K562 (cell line): ENCODE measurements at regions of chr2 and their contacts with region 1.

Region 1: DNA sequence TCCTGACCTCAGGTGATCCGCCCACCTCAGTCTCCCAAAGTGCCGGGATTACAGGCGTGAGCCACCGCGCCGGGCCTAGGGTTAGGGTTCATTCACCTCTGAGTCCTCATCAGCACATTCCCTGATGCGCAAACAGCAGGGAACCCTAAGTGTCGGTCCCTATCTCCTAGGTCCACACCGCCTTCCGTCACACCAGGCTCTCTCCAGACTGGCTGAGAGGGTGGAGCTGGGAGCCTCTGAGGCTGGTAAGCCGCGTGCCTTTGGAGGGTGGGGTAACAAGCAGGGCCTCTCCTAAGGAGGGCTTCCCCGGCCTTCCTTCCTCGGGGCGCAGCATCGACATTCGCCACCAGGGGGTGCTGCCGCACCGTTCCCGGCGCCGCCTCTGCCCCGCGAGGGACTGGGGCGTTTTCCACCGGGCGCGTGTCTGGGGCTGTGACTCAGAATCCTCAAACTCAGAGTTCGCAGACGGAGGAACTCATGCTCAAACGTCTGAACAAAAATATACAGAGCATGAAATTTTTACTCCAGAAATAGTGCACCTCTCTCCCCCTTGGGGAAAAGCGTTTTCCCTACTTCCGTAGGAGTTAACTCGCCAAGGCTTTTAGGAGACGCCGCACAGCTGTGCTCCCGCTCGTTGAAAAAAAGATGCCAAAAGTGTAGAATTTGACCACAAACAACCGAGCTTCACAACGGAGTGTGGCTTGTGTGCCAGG is 63.9 kb upstream of the ASAP2 start:
- DNase-seq: peak; percentile 90 to 97 (median 96)
- ATAC-seq: peak; percentile 94
- H3K4me3 ChIP-seq: peak overlapping the region; percentile 5; the same call in 1 of the 2 replicates
- H3K27ac ChIP-seq: no peak overlapping the region
- H3K4me1 ChIP-seq: peaks cover 6 to 34% of the 10 kb centered on the region in 2 experiments; a peak in 4 of 5 replicates
- H3K27me3 ChIP-seq: peaks cover 5 to 11% of the 10 kb centered on the region in 2 experiments; a peak in 4 of 5 replicates
- CTCF ChIP-seq: peak; percentile 94 to 96 (median 95)
- EP300 ChIP-seq: no peak; the same call in 1 of the 2 replicates
- POLR2A ChIP-seq: no peak
- RAD21 ChIP-seq: peak; percentile 100

Region 2: DNA sequence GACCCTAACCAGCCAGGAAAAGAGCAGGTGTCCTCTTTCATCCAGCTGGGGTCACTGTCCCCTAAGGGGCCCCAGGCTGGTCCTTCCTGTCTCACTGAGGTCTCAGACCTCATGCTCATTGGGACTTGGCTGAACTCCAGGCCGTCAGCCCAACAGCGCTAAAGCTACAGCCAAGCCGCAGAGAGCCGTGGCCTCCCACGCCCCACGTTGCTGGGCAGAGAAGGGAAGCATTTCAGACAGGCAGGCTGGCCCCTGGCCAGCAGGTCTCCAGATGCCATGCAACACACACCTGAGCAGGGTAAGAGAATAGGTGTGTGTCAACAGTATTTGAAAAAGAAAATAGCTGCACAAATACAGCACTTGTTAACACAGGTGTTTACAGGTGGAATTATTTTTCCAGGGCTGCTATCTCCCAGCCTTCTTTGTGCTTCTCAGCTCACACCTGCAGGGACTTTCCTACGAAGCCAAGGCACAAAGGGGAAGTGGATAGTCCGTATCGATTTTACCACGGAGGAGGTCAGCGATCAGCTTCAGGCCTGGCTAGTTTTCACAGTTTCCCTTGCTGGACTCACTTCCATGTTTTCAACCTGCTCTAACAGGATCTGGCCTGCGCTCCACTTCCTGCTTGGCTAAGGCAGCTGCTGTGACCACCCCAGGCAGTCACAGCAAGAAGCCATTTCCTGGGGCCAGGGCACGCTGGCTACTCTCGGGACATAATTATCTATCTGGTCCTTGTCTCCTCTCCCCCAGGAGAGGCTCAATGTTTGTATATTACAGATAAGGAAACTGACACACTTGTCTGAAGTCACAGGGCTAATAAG is 616.9 kb before region 1 on chr2:
- CTCF ChIA-PET with region 1: no interaction called
- POLR2A ChIA-PET with region 1: no interaction called
- in situ Hi-C with region 1: no loop called
- intact Hi-C with region 1: loop called (anchors 10 kb)
- DNase-seq: peak; percentile 94 to 97 (median 95)
- ATAC-seq: peak; percentile 96
- H3K4me3 ChIP-seq: no peak overlapping the region
- H3K27ac ChIP-seq: peak overlapping the region; percentile 79
- H3K4me1 ChIP-seq: peaks cover 20 to 24% of the 10 kb centered on the region in 2 experiments
- H3K27me3 ChIP-seq: no peaks in the 10 kb centered on the region; a peak in 1 of 5 replicates
- CTCF ChIP-seq: peak; percentile 87 to 96 (median 90)
- EP300 ChIP-seq: peak; percentile 91
- POLR2A ChIP-seq: no peak
- RAD21 ChIP-seq: peak; percentile 97 to 99

Region 3: GRCh38 chr2:8872821-8873432 is 269.8 kb before region 1 on chr2:
- CTCF ChIA-PET with region 1: interaction called, 6 read pairs
- POLR2A ChIA-PET with region 1: interaction called, 3 read pairs
- in situ Hi-C with region 1: no loop called
- intact Hi-C with region 1: loop called (anchors 2 kb)
- DNase-seq: peak; percentile 29 to 59 (median 34)
- ATAC-seq: peak; percentile 67
- H3K4me3 ChIP-seq: no peak overlapping the region
- H3K27ac ChIP-seq: no peak overlapping the region
- H3K4me1 ChIP-seq: peaks cover 0 to 2% of the 10 kb centered on the region in 2 experiments; a peak in 1 of 5 replicates
- H3K27me3 ChIP-seq: no peaks in the 10 kb centered on the region
- CTCF ChIP-seq: peak; percentile 40 to 62 (median 50); a peak in 5 of 6 replicates
- EP300 ChIP-seq: no peak
- POLR2A ChIP-seq: no peak
- RAD21 ChIP-seq: peak; percentile 69 to 75

Region 4: GRCh38 chr2:9165625-9166024 is 22.9 kb after region 1 on chr2:
- CTCF ChIA-PET with region 1: no interaction called
- POLR2A ChIA-PET with region 1: interaction called, 3 read pairs
- in situ Hi-C with region 1: no loop called
- intact Hi-C with region 1: loop called (anchors 2 kb)
- DNase-seq: no peak
- ATAC-seq: no peak
- H3K4me3 ChIP-seq: no peak overlapping the region
- H3K27ac ChIP-seq: no peak overlapping the region
- H3K4me1 ChIP-seq: peaks cover 8 to 21% of the 10 kb centered on the region in 2 experiments
- H3K27me3 ChIP-seq: peaks cover 4 to 30% of the 10 kb centered on the region in 2 experiments; a peak in 4 of 5 replicates
- CTCF ChIP-seq: no peak
- EP300 ChIP-seq: no peak
- POLR2A ChIP-seq: no peak
- RAD21 ChIP-seq: no peak

Region 5: GRCh38 chr2:9256570-9257043 is 113.9 kb after region 1 on chr2:
- CTCF ChIA-PET with region 1: interaction called, 3 read pairs
- POLR2A ChIA-PET with region 1: no interaction called
- in situ Hi-C with region 1: no loop called
- intact Hi-C with region 1: loop called (anchors 5 kb)
- DNase-seq: no peak
- ATAC-seq: peak; percentile 52
- H3K4me3 ChIP-seq: no peak overlapping the region
- H3K27ac ChIP-seq: no peak overlapping the region
- H3K4me1 ChIP-seq: peaks cover 0 to 6% of the 10 kb centered on the region in 2 experiments; a peak in 1 of 5 replicates
- H3K27me3 ChIP-seq: peaks cover 10 to 47% of the 10 kb centered on the region in 2 experiments; a peak in 3 of 5 replicates
- CTCF ChIP-seq: peak in 1 of 3 experiments; percentile 26; a peak in 2 of 6 replicates
- EP300 ChIP-seq: no peak
- POLR2A ChIP-seq: no peak
- RAD21 ChIP-seq: peak in 1 of 2 experiments; percentile 54; a peak in 2 of 4 replicates

Region 6: DNA sequence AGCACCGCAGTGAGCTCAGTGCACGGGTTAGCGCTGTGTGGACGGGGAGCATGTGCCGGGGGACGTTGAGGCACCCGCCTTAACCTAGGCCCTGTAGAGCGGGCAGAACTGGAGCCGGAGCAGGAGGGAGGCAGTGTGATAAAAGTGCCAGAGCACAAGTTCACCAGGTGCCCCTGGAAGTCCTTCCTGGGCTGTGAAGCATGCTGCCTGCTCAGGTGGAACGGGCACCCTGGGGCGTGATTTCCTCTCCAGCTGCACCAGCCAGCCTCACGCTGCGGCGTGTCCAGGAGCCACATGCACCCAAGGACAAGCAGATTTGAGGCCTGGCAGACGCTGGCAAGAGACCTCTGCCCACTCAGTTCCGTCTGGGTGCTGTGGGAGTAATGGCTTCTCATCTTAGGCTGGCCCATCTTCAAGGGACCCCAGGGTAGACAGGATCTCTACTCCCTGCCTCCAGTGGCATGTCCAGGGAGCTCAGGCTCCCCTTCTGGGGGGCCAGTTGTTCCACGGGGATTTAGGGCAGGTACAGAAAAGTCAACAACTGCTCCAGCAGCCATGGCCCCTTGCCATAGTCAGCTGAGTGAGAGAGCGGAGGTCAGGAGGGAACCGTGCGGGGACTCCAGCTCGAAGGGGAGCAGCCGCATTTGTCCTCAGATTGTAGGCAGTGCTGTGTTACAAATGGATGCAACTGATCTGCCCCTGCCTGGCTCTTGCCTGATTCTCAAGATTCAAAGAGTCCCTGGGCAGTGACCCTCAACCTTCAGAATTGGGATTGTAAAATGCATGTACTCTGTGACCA is 230.6 kb after region 1 on chr2:
- CTCF ChIA-PET with region 1: interaction called, 29 read pairs
- POLR2A ChIA-PET with region 1: interaction called, 3 read pairs
- in situ Hi-C with region 1: loop called (anchors 5 kb)
- intact Hi-C with region 1: loop called (anchors 1 kb)
- DNase-seq: no peak
- ATAC-seq: no peak
- H3K4me3 ChIP-seq: no peak overlapping the region
- H3K27ac ChIP-seq: no peak overlapping the region
- H3K4me1 ChIP-seq: no peaks in the 10 kb centered on the region
- H3K27me3 ChIP-seq: peaks cover 2 to 48% of the 10 kb centered on the region in 2 experiments; a peak in 4 of 5 replicates
- CTCF ChIP-seq: no peak
- EP300 ChIP-seq: no peak
- POLR2A ChIP-seq: no peak
- RAD21 ChIP-seq: no peak

Region 7: DNA sequence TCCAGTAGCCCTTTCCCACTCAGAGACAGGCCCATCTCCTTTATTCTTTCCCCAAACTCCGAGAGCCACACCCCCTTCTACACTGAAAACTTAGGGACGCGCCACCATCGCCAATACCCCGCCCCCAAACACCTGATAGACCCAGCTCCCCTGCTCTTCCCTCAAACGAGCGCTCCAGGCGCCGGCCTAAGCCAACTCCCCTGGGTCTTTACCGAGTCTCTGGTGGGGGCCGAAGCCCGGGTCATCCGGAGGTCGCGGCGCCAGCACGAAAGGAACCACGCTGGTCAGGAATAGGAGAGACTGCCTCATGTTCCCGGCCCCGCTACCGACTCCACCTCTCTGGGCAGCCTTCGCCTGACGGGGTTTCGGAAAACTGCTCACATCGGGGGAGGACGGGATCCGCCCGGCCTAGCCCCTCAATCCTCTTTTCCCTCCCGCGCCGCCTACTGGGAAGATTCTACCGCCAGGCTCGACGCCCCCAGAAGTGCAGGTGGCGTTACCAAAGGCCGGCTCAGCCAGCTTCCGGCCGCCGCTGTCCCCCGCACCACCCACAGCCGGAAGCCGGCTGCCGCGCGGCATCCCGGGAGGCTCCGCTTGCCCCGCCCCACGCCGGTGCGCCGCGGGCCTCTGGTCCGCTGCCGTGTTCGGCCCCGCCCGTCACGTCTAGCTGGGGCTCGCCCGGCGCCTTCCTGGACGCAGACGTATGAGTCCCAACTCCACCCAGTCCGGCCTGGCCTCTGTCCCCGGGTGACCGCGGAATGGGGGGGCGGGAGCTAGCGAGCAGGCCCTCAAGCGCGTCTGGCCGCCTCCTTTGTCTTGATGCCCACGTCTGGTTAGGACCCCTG is 412.8 kb after region 1 on chr2 and contains the start of gene ADAM17:
- CTCF ChIA-PET with region 1: no interaction called
- POLR2A ChIA-PET with region 1: no interaction called
- in situ Hi-C with region 1: no loop called
- intact Hi-C with region 1: loop called (anchors 10 kb)
- DNase-seq: peak; percentile 91 to 97 (median 93)
- ATAC-seq: peak; percentile 94
- H3K4me3 ChIP-seq: peak within 1 kb of the TSS; percentile 79
- H3K27ac ChIP-seq: peak within 1 kb of the TSS; percentile 97
- H3K4me1 ChIP-seq: peaks cover 9 to 16% of the 10 kb centered on the region in 2 experiments; a peak in 4 of 5 replicates
- H3K27me3 ChIP-seq: no peaks in the 10 kb centered on the region
- CTCF ChIP-seq: peak; percentile 31 to 60 (median 41); a peak in 5 of 6 replicates
- EP300 ChIP-seq: peak; percentile 32; the same call in 1 of the 2 replicates
- POLR2A ChIP-seq: peak; percentile 93
- RAD21 ChIP-seq: 0 out of 4 replicates have a peak, but pooled peaks of 1 of the 2 experiments have one; percentile 6
- polyA plus RNA-seq, gene ADAM17: 5.8 to 7.8 TPM

Region 8: GRCh38 chr2:9638532-9638931 is 495.8 kb after region 1 on chr2:
- CTCF ChIA-PET with region 1: no interaction called
- POLR2A ChIA-PET with region 1: no interaction called
- in situ Hi-C with region 1: no loop called
- intact Hi-C with region 1: no loop called
- DNase-seq: peak; percentile 58 to 91 (median 74)
- ATAC-seq: peak; percentile 94
- H3K4me3 ChIP-seq: no peak overlapping the region
- H3K27ac ChIP-seq: no peak overlapping the region; the same call in 2 of the 3 replicates
- H3K4me1 ChIP-seq: peaks cover 33 to 43% of the 10 kb centered on the region in 2 experiments; a peak in 4 of 5 replicates
- H3K27me3 ChIP-seq: peaks cover 0 to 9% of the 10 kb centered on the region in 2 experiments; a peak in 2 of 5 replicates
- CTCF ChIP-seq: no peak
- EP300 ChIP-seq: peak; percentile 72
- POLR2A ChIP-seq: no peak
- RAD21 ChIP-seq: no peak